GM13977 (cell line): ENCODE measurements at regions of chr11 and their contacts with region 1.

Region 1: GRCh38 chr11:63641727-63642126 is 27.5 kb upstream of the PLAAT3 start:
- DNase-seq: no peak
- CTCF ChIP-seq: no peak

Region 2: DNA sequence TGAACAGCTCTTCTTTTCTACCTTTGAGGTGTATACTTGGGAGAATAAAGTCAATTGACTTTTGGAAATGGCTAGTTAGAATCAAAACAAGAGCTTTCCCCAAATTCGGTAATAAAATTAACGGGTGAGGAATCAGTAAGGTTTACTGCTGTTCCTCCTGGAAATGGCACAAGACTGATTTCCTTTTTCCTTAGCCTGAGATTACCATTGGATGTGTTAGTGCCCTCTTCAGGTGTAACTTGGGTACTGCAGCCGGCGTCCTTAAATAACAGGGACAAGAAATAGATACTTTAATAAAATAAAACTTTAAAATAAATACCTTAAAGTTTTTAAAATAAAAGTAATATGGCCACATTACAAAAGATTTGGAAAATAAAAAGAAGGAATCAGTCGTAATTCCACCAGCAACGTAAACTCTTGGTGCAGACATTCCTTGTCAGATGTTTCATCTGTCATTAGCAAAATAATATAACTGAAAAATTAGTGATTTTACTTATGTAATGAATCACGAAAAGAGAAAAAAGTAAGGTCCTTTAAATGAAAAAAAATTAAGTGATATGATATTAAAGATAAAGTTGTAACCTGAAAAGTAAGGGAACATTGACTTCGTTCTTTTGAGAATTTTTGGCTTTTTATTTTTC is 97.1 kb after region 1 on chr11:
- in situ Hi-C with region 1: loop called (anchors 10 kb)
- DNase-seq: peak; percentile 39
- CTCF ChIP-seq: peak; percentile 81

Region 3: DNA sequence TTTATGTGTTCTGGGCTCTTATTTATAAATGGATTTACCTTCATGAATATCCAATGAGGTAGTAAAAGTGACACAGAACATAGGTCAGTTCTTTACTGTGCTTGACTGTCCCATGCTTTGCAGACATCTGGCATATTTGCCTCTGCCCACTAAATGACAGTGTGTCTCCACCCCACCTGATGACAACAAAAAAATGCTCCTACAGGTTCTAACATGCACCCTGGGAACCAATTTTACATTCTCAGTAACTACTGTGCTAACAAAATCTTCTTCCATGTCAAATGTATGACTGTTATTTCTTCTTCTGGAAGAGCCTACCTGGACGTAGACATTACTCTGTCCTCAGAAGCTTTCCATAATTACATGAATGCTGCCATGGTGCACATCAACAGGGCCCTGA is 110.5 kb after region 1 on chr11:
- in situ Hi-C with region 1: no loop called
- DNase-seq: no peak
- CTCF ChIP-seq: no peak

Region 4: DNA sequence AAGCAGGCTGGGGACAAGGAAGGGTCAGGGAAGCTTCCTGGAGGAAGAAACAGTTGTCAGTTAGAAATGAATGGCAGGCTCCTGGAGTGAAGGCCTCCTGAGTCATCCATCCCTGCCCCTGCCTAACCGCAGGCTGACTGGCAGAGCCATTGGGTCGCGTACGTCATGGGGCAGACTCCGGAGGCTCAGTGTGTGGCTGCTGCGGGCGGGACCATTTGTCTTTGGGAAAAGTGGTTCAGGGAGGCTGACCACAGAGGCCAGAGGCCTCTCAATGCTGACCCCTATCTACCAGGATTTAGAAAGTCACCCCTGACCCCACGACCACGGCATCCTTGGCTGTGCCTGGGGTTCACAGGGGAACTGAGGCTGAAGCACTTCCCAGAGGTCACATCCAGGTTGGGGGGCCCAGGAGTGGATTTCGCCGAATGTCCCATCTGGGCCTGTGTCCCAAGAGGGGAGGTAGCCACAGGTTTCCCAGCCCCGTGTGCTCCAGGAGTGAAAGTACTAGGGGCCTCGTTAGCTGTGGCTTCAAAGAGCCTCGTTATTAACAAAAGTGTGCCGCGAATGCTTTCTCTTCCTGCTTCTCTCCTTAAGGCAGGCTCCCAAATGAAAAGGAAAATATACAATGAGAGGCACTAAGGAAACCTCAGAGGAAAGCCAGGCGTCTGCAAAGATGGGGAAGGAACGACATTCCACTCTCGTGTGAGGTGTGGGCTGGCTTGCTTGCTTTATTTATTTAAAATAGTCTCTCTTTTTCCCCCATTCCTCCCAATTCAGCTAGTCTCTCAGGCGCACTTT is 452.9 kb after region 1 on chr11:
- in situ Hi-C with region 1: no loop called
- DNase-seq: no peak
- CTCF ChIP-seq: no peak